ENCODE measurements at regions of chr6 and their contacts with region 1.

Region 1: DNA sequence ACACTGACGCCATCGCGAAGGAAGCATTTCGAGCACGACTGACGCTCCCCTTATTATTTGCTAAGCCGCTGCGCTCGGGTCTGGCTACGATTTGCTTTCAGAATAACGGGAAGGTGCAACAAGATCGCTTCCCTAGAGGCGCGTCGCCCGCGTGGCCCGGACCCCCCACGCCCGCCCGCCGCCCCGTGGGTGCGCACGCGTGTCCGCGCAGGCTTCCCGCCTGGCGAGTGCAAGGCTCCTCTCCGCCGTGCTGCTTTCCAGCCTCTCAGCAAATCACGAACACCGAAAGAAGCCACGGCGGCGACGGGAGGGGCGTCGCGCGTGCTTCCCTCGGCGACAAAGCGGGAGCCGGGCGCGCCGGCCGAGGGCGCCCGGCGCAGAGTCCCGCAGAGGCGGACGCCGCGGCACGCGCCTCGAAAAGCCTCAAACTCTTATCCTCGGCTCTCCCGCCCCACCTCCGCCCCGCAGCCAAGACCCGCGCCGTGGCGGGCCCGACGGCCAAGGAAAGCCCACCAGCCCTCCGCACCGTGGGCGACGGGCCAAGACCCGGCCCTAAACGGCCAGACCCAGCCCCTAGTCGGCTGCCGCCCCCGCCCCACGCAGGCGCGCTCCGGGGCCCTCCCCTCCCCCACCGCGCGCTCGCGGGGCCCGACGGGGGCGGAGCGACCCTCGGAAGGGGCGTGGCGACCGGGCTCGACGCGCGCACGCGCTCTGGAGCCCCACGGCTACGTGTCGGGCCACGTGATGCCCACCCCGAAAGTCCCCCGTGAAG is 987 bp upstream of the QKI start:
- DNase-seq: peak; percentile 90
- ATAC-seq: peak; percentile 79
- H3K4me3 ChIP-seq: peak overlapping the region; percentile 100
- H3K27ac ChIP-seq: peak overlapping the region; percentile 78
- H3K4me1 ChIP-seq: peaks cover 2% of the 10 kb centered on the region; the same call in 1 of the 2 replicates
- H3K27me3 ChIP-seq: no peaks in the 10 kb centered on the region
- CTCF ChIP-seq: no peak
- POLR2A ChIP-seq: no peak; the same call in 1 of the 2 replicates
- RAD21 ChIP-seq: no peak

Region 2: DNA sequence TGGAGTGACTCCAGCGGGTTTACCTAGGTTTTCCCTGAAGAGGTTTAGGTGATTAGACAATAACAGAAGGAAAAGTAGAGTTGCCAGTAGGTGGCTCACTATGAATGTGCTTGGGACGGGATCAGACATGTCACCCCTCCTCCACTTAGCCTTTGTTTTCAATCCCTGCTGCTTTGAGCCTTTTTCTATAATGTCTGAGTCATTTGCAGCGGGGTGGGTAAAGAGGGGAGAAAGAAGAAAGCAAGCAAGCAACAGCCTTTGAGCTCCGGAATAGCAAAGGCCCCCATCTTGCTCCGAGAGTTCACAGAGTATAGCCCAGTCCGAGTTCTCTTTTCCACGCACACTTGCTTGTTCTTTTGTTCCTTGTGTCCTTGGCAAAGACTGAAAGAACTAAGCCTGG is 556.6 kb before region 1 on chr6:
- CTCF ChIA-PET with region 1: no interaction called
- POLR2A ChIA-PET with region 1: no interaction called
- dilution Hi-C with region 1: no loop called
- in situ Hi-C with region 1: no loop called
- intact Hi-C with region 1: loop called (anchors 2 kb)
- DNase-seq: peak; percentile 60
- ATAC-seq: peak; percentile 89
- H3K4me3 ChIP-seq: peak overlapping the region; percentile 22; the same call in 1 of the 2 replicates
- H3K27ac ChIP-seq: no peak overlapping the region
- H3K4me1 ChIP-seq: no peaks in the 10 kb centered on the region
- H3K27me3 ChIP-seq: no peaks in the 10 kb centered on the region
- CTCF ChIP-seq: peak; percentile 46
- POLR2A ChIP-seq: no peak
- RAD21 ChIP-seq: peak; percentile 63

Region 3: GRCh38 chr6:162964488-162965140 is 448.9 kb before region 1 on chr6:
- CTCF ChIA-PET with region 1: no interaction called
- POLR2A ChIA-PET with region 1: no interaction called
- dilution Hi-C with region 1: no loop called
- in situ Hi-C with region 1: no loop called
- intact Hi-C with region 1: loop called (anchors 10 kb)
- DNase-seq: peak; percentile 99
- ATAC-seq: peak; percentile 93
- H3K4me3 ChIP-seq: no peak overlapping the region
- H3K27ac ChIP-seq: peak overlapping the region; percentile 82
- H3K4me1 ChIP-seq: peaks cover 4% of the 10 kb centered on the region
- H3K27me3 ChIP-seq: no peaks in the 10 kb centered on the region
- CTCF ChIP-seq: no peak
- POLR2A ChIP-seq: no peak
- RAD21 ChIP-seq: no peak

Region 4: GRCh38 chr6:163533443-163533842 is 119.9 kb after region 1 on chr6:
- CTCF ChIA-PET with region 1: no interaction called
- POLR2A ChIA-PET with region 1: no interaction called
- dilution Hi-C with region 1: no loop called
- in situ Hi-C with region 1: no loop called
- intact Hi-C with region 1: loop called (anchors 5 kb)
- DNase-seq: peak; percentile 97
- ATAC-seq: peak; percentile 75
- H3K4me3 ChIP-seq: no peak overlapping the region
- H3K27ac ChIP-seq: no peak overlapping the region
- H3K4me1 ChIP-seq: peaks cover 17% of the 10 kb centered on the region
- H3K27me3 ChIP-seq: no peaks in the 10 kb centered on the region
- CTCF ChIP-seq: no peak
- POLR2A ChIP-seq: no peak
- RAD21 ChIP-seq: no peak

Region 5: DNA sequence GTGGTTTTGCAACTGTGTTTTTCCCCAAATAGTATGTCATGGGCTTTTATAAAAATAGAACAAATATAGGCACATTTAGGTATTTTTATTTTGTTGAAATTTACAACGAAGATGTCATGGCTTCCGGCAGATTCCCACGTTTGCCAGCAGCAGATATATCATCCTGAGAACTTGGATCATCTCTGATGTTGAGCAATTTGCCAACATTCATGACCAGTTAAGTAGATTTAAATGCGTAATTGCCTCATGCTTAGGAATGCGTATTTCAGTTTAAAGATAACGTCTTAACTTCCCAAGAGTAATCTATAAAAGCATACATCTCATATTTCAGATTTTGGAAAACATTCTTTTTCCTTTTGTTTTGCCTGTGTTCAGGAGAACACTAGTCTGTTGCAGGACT is 458.8 kb after region 1 on chr6:
- CTCF ChIA-PET with region 1: no interaction called
- POLR2A ChIA-PET with region 1: no interaction called
- dilution Hi-C with region 1: no loop called
- in situ Hi-C with region 1: no loop called
- intact Hi-C with region 1: loop called (anchors 5 kb)
- DNase-seq: peak; percentile 98
- ATAC-seq: peak; percentile 80
- H3K4me3 ChIP-seq: no peak overlapping the region
- H3K27ac ChIP-seq: no peak overlapping the region
- H3K4me1 ChIP-seq: peaks cover 5% of the 10 kb centered on the region
- H3K27me3 ChIP-seq: no peaks in the 10 kb centered on the region
- CTCF ChIP-seq: no peak
- POLR2A ChIP-seq: no peak
- RAD21 ChIP-seq: no peak

Region 6: DNA sequence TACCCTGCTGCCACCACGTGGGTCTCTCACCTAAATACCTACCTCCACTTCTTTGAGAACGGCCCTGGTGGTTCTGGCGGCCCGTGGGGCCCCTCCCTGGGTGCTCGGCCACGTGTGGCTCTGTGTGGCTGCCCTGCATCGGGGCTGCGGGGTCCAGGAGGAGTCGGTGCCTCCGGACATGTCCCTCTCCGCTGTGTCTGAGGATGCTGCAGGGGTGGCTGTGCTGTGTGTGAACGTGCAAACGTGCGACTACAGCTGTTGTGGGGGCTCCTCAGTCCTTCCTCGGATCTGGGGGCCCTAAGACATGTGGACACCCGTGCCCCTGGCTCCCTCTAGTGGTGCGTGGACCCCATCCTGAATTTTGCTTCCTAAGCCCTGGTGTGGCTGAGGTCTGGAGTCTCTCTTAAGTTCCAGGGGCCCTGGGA is 692.8 kb after region 1 on chr6:
- CTCF ChIA-PET with region 1: no interaction called
- POLR2A ChIA-PET with region 1: no interaction called
- dilution Hi-C with region 1: no loop called
- in situ Hi-C with region 1: no loop called
- intact Hi-C with region 1: loop called (anchors 2 kb)
- DNase-seq: no peak
- ATAC-seq: no peak
- H3K4me3 ChIP-seq: no peak overlapping the region
- H3K27ac ChIP-seq: no peak overlapping the region
- H3K4me1 ChIP-seq: no peaks in the 10 kb centered on the region
- H3K27me3 ChIP-seq: no peaks in the 10 kb centered on the region
- CTCF ChIP-seq: no peak
- POLR2A ChIP-seq: no peak
- RAD21 ChIP-seq: no peak

Region 7: DNA sequence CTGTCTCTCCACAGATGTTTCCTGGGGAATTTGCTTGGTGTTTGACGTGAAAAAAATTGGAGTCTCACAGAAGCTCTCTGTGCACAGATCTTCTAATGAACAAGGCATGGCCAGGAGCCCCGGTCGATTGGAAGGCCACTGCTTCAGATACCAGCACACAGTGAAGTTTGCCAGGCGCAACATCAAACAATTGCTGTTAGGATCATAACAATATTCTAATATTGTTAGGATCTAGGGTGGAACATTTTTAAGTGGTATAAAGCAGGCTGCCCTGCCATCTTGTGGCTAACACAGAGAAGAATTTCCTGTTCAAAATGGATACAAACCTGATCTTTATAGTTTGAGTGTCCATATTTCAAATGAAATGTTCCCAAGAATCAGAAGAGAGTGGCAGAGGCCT is 1831.8 kb after region 1 on chr6:
- CTCF ChIA-PET with region 1: no interaction called
- POLR2A ChIA-PET with region 1: no interaction called
- dilution Hi-C with region 1: no loop called
- in situ Hi-C with region 1: no loop called
- intact Hi-C with region 1: loop called (anchors 10 kb)
- DNase-seq: peak; percentile 2
- ATAC-seq: peak; percentile 78
- H3K4me3 ChIP-seq: no peak overlapping the region
- H3K27ac ChIP-seq: no peak overlapping the region
- H3K4me1 ChIP-seq: no peaks in the 10 kb centered on the region
- H3K27me3 ChIP-seq: no peaks in the 10 kb centered on the region
- CTCF ChIP-seq: 0 out of 2 replicates have a peak, but pooled peaks have one; percentile 16
- POLR2A ChIP-seq: no peak
- RAD21 ChIP-seq: no peak

Measured in IMR-90 (cell line).